Psoas muscle (tissue), 8 donors: ENCODE measurements at regions of chr10 and their contacts with region 1.

Region 1: GRCh38 chr10:71390461-71390835 is 6.3 kb upstream of the CDH23 start:
- DNase-seq: no peak
- ATAC-seq: no peak
- H3K4me3 ChIP-seq: no peak overlapping the region
- H3K27ac ChIP-seq: no peak overlapping the region
- H3K4me1 ChIP-seq: no peaks in the 10 kb centered on the region
- H3K27me3 ChIP-seq: peaks cover 0 to 18% (median 0%) of the 10 kb centered on the region in 3 donors
- CTCF ChIP-seq: no peak

Region 2: GRCh38 chr10:70693619-70694335 is 696.7 kb before region 1 on chr10:
- intact Hi-C with region 1: no loop called
- DNase-seq: peak; percentile 67 to 72
- ATAC-seq: peak in 2 of 4 donors; percentile 35 to 47
- H3K4me3 ChIP-seq: no peak overlapping the region
- H3K27ac ChIP-seq: no peak overlapping the region
- H3K4me1 ChIP-seq: no peaks in the 10 kb centered on the region
- H3K27me3 ChIP-seq: peaks cover 0 to 4% (median 0%) of the 10 kb centered on the region in 3 donors
- CTCF ChIP-seq: no peak

Region 3: DNA sequence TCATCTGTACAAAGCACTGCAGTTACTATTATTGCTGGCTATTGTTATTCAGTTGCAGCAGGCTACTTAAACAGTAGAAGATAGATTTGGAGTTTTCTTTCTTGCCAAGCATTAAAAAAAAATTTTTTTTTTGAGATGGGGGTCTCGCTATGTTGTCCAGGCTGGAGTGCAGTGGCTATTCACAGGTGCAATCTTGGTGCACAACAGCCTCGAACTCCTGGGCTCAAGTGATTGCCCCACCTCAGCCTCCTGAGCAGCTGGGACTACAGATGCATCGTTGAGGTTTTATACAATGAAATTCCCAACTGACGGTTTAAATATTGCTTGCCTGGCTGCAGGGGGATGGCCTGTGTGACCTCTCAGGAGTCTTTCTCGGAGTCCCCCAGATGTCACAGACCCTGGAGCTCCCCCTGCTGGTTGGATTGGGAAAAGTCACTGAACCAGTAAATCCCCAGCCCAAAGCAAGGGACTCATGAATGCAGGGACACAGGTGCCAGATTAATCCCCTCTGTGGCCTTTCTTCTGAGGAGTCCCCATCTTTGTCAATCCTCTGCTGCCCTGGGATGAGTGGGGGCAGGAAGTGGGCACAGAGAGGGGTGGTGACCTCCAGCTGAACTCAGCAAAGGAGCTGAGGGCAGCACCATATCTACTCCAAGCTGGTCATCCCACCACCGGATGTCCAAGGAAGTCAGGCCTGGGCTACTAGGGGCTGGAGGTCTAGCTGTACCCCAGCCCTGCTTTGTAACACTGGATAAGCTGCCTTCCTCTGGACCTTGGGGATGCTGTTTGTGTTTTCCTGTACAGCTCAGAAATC is 179.5 kb after region 1 on chr10:
- intact Hi-C with region 1: loop called (anchors 2 to 5 kb)
- DNase-seq: peak; percentile 69 to 79
- ATAC-seq: peak; percentile 60 to 76 (median 66)
- H3K4me3 ChIP-seq: no peak overlapping the region
- H3K27ac ChIP-seq: no peak overlapping the region
- H3K4me1 ChIP-seq: peaks cover 1% of the 10 kb centered on the region
- H3K27me3 ChIP-seq: no peaks in the 10 kb centered on the region
- CTCF ChIP-seq: peak; percentile 83

Region 4: DNA sequence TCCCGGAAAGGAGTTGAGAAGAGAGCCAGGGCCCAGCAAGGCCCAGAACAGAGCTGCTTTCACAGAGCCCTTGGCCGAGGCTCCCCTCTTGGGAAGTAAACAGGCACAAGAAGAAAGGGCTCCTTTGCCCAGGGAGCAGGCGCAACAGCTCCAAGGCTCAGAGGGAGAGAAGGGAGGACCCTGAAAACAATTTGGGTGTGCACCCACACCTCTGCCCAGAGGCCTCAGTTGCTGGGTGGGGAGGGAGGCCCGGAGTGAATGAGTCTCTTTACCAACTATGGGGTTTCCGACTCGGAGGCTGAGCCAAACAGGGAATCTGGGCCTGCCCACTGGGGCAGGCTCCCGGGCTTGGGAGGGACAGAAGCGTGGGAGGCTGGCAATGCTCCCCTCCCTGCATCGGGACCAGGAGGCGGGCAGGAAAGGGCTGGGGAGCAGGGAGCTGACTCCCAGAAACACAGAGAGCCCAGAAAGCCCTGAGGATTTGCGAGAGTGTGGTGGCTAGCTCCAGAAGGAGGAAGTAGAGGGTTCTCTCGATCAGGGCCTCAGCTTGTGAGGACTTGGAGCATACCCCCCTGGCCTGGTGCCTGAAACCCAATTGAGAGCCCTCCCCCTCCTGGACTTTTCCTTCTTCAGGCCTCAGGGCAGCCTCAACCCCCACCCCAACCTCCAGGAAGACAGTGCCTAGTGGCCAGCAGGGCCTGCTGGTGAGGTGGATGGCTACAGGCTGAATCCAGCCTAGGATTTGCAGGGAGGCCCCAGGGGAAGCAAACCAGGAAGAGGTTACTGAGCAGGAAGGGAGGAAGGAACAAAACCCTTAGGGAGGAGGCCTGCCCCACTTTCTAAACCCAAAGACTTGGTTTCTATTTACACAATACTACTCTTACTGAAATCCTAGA is 322.9 kb after region 1 on chr10:
- intact Hi-C with region 1: loop called in 1 of 2 experiments (anchors 5 kb)
- DNase-seq: peak; percentile 88 to 89
- ATAC-seq: peak; percentile 34 to 80 (median 66)
- H3K4me3 ChIP-seq: no peak overlapping the region
- H3K27ac ChIP-seq: peak overlapping the region; percentile 65
- H3K4me1 ChIP-seq: peaks cover 20% of the 10 kb centered on the region
- H3K27me3 ChIP-seq: no peaks in the 10 kb centered on the region
- CTCF ChIP-seq: no peak

Region 5: DNA sequence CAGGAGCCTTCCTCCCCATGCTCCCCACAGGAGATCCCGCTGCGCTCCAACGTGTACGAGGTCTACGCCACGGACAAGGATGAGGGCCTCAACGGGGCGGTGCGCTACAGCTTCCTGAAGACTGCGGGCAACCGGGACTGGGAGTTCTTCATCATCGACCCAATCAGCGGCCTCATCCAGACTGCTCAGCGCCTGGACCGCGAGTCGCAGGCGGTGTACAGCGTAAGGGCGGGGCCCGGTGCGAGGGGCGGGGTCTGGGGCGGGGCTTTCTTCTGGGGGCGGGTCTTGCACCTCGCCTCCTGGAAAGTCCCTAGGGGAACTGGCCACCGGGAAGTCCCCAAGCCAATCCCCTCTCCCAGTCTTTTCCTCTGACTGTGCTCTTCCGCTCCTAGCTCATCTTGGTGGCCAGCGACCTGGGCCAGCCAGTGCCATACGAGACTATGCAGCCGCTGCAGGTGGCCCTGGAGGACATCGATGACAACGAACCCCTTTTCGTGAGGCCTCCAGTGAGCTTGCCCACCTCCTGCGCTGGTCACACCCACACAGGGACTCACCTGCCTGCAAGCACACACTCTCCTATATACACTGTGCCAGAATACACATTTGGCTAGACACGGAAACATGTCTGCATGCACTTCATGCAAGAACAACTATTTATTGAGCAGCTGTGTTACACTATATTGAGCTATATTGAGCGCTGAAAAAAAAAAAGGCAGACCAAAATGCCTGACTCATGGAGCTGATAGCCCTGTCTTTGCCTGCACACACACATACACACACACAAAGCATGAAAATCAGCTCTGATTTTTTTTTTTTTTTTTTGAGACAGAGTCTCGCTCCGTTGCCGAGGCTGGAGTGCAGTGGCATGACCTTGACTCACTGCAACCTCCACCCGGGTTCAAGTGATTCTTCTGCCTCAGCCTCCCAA is 415.6 kb after region 1 on chr10:
- intact Hi-C with region 1: loop called in 1 of 2 experiments (anchors 5 kb)
- DNase-seq: no peak
- ATAC-seq: peak in 3 of 4 donors; percentile 21 to 48 (median 40)
- H3K4me3 ChIP-seq: no peak overlapping the region
- H3K27ac ChIP-seq: no peak overlapping the region
- H3K4me1 ChIP-seq: no peaks in the 10 kb centered on the region
- H3K27me3 ChIP-seq: no peaks in the 10 kb centered on the region
- CTCF ChIP-seq: no peak